Activated T-helper 2 cell treated with anti-CD3 and anti-CD28 coated beads, Interferon-gamma antibody, Interleukin-2, Interleukin-4, amounts not matched to agents 10 μg/mL and 5 μg/mL and 100 μg/mL, durations not matched to agents 14 hours and 24 hours and 36 hours (primary cell): ENCODE measurements at regions of chr20 and their contacts with region 1.

Region 1: DNA sequence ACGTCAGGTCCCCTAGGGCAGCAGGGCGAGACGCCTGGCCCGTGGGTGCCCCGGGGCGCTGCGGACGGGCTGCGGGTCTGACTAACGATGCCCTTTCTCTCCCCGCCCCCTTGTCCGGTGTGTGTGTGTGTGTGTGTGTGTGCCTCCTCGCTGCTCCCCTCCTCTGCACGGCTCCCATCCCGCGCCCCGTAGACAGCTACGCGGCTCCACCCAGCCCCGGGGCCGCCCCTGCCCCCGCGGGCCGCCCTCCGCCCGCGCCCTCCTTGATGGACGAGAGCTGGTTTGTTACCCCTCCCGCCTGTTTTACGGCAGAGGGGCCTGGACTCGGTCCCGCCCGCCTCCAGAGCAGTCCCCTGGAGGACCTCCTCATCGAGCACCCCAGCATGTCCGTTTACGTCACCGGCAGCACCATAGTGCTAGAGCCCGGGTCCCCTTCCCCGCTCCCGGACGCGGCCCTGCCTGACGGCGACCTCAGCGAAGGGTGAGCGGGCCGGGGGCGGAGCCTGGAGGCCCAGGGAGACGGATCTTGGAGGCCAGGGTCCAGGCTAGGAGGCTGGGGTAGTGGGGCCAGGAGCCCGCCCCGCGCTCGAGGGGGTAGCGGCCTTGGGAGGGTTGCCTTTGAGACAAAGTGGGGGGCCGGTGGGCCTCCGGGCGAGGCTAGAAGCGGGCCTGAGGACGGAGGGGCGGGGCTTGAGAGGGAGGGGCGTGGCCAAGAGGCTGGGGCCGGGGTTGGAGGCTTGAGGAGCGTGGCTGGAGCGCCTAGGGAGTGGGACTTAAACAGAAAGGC is 5.1 kb downstream of the TP53INP2 start:
- DNase-seq: peak; percentile 77
- H3K4me3 Mint-ChIP-seq: peak overlapping the region; percentile 84
- H3K27ac Mint-ChIP-seq: peak overlapping the region; percentile 89
- H3K4me1 Mint-ChIP-seq: peaks cover 33% of the 10 kb centered on the region
- H3K27me3 Mint-ChIP-seq: no peaks in the 10 kb centered on the region

Region 2: GRCh38 chr20:34538671-34539123 is 170.5 kb before region 1 on chr20:
- intact Hi-C with region 1: loop called (anchors 1 kb)
- DNase-seq: no peak
- H3K4me3 Mint-ChIP-seq: no peak overlapping the region
- H3K27ac Mint-ChIP-seq: no peak overlapping the region
- H3K4me1 Mint-ChIP-seq: peaks cover 4% of the 10 kb centered on the region
- H3K27me3 Mint-ChIP-seq: no peaks in the 10 kb centered on the region

Region 3: DNA sequence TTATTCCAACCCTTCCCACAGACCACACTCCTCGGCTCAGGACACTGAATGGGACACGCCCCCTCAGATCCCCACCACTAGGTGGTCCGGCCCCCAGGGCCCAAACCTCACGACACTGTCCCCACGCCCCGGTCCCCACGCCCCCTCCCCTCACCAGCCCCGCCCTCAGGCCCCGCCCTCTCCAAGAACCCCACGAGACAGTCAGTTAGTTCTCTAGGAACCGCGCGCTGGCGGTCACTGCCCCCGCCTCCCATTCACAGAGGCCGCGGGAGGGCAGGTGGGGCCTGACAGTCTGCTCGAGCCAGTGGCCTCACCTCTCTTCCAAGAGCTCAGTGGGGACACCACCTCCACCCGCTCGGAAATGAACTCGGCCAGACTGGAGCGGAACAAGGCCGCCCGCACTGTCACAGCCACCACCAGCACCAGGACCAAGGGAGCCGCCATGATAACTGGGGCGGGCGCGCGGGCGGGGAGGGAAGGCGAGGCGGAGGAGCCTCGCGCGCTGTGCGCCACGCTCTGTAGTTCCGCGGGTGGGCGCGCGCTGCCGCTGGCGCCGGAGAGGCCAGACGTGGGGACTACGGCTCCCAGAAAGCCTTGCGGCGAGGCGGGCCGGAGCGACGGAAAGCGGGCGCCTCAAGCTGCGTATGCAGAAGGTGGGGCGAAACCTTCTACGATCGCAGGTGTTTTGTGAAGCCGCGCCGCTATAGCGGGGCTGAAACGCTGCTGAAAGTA is 32.4 kb before region 1 on chr20 and contains the start of gene PIGU:
- intact Hi-C with region 1: loop called (anchors 1 kb)
- DNase-seq: peak; percentile 96
- H3K4me3 Mint-ChIP-seq: peak within 1 kb of the TSS; percentile 93
- H3K27ac Mint-ChIP-seq: peak within 1 kb of the TSS; percentile 96
- H3K4me1 Mint-ChIP-seq: peaks cover 17% of the 10 kb centered on the region
- H3K27me3 Mint-ChIP-seq: no peaks in the 10 kb centered on the region
- total RNA-seq, gene PIGU: 24.9 and 25.7 TPM in 2 replicates

Region 4: DNA sequence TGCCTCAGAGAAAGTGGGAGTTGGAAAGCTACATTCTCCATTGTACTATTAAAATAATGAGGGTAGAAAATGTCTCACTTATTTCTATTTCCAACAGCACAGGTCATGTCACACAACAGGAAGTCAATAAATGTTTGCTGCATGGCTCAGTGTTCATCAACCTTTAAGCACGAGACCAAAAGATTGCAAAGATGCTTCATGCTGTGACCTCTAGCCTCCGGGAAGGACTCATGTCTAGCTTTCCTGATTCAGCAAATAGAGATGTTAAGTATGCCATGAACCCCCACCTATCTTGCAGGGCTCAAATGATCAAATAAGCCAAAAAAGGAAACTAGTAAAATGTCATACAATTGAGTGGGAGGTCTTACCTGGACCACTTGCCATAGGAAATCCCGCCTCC is 58.9 kb after region 1 on chr20:
- intact Hi-C with region 1: loop called (anchors 5 kb)
- DNase-seq: no peak
- H3K4me3 Mint-ChIP-seq: no peak overlapping the region
- H3K27ac Mint-ChIP-seq: no peak overlapping the region
- H3K4me1 Mint-ChIP-seq: peaks cover 2% of the 10 kb centered on the region
- H3K27me3 Mint-ChIP-seq: no peaks in the 10 kb centered on the region